Common myeloid progenitor, CD34-positive (primary cell): ENCODE measurements at regions of chr7 and their contacts with region 1.

Region 1: GRCh38 chr7:123705211-123705901 is 43.4 kb downstream of the WASL start:
- DNase-seq: no peak
- H3K4me3 ChIP-seq: no peak overlapping the region
- H3K27ac ChIP-seq: no peak overlapping the region
- H3K4me1 ChIP-seq: no peaks in the 10 kb centered on the region
- H3K27me3 ChIP-seq: no peaks in the 10 kb centered on the region

Region 2: DNA sequence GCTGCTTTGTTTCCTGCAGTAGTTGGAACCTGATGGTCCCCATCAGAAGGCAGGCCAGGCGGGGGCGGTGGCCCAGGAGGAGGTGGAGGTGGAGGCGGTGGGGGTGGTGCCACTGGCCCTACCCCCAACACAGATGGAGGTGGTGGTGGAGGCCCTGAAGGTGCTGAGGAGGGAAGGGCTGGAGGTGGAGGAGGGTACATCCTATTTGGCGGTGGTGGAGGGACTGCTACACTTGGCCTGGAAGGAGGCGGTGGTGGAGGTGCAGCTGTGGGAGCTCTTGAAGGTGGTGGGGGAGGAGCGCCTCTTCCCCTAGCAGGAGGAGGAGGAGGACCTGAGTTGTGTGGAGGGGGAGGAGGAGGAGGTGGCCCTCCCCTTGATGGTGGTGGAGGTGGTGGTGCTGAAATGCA is 12.9 kb before region 1 on chr7:
- CTCF ChIA-PET with region 1: interaction called, 10 read pairs
- POLR2A ChIA-PET with region 1: no interaction called
- DNase-seq: no peak
- H3K4me3 ChIP-seq: no peak overlapping the region
- H3K27ac ChIP-seq: no peak overlapping the region
- H3K4me1 ChIP-seq: no peaks in the 10 kb centered on the region
- H3K27me3 ChIP-seq: no peaks in the 10 kb centered on the region